ENCODE measurements at regions of chr19 and their contacts with region 1.

Region 1: GRCh38 chr19:29878973-29879654 is 62.9 kb upstream of the URI1 start:
- DNase-seq: peak; percentile 91
- H3K4me3 ChIP-seq: peak overlapping the region; percentile 46 to 63
- H3K27ac ChIP-seq: no peak overlapping the region
- H3K4me1 ChIP-seq: peaks cover 0 to 6% of the 10 kb centered on the region in 2 experiments; a peak in 1 of 4 replicates
- H3K27me3 ChIP-seq: no peaks in the 10 kb centered on the region; the same call in 1 of the 2 replicates
- CTCF ChIP-seq: no peak
- EP300 ChIP-seq: no peak
- RAD21 ChIP-seq: no peak

Region 2: GRCh38 chr19:29731331-29731850 is 147.7 kb before region 1 on chr19:
- CTCF ChIA-PET with region 1: interaction called, 81 read pairs
- POLR2A ChIA-PET with region 1: no interaction called
- DNase-seq: no peak
- H3K4me3 ChIP-seq: no peak overlapping the region
- H3K27ac ChIP-seq: no peak overlapping the region
- H3K4me1 ChIP-seq: no peaks in the 10 kb centered on the region
- H3K27me3 ChIP-seq: no peaks in the 10 kb centered on the region; the same call in 1 of the 2 replicates
- CTCF ChIP-seq: no peak
- EP300 ChIP-seq: no peak
- RAD21 ChIP-seq: no peak

Region 3: DNA sequence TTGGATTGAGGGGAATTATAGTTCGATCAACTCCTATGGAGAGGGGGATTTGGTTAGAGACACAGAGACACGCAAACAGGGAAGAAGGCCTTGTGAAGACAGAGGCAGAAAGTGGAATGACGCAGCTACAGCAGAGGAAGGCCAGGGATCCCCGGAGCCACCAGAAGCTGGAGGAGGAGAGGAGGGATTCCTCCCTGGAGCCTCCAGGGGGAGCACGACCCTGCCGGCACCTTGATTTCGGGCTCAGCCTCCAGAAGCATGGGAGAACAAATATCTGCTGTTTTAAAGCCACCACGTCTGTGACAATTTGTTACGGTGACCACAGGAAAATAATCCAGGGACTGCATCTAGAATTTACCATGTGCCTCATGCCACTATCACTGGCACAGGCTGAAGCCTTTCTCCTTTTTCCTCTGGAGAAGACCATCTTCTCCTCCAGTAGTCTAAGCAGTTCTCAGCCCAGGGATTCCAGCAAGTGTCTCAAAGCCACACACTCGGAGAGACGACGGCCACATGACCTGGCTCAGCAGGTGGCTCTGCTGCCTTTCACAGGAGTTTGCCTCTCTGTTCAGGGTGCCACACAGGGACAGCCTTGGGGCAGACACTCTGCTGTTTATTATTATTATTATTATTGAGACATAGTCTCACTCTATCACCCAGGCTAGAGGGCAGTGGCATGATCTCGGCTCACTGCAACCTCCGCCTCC is 107.3 kb before region 1 on chr19:
- CTCF ChIA-PET with region 1: interaction called, 31 read pairs
- POLR2A ChIA-PET with region 1: no interaction called
- DNase-seq: peak; percentile 86
- H3K4me3 ChIP-seq: no peak overlapping the region
- H3K27ac ChIP-seq: no peak overlapping the region
- H3K4me1 ChIP-seq: peaks cover 0 to 6% of the 10 kb centered on the region in 2 experiments; a peak in 1 of 4 replicates
- H3K27me3 ChIP-seq: no peaks in the 10 kb centered on the region
- CTCF ChIP-seq: peak; percentile 70
- EP300 ChIP-seq: no peak
- RAD21 ChIP-seq: peak; percentile 70

Region 4: DNA sequence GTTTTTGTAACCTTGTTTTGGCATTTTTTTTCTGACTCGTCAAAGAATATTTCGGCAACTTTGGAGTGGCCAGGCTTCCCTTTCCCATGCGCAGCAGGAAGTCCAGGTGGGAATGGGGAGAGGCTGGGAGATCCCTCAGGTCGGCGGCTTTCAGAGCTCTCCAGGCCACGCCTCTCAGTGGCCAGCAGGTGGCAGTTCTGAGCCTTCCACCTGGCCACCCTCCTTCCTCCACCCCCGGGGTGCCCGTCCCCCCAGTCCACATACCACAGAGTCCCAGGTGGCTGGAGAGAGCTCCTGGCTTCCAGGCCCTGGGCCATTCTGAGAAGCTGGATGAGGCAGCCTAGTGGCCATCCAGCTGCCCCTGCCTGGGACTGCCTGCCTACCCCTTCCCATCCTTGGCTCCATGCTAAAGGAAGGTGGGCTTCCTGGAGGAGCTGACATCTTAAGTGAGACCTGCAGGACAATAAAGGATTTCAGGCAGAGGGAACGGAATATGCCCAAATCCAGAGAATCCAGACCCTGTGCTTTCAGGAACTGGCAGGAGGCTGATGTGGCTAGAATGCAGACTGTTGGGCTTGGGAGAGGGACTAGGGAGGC is 21.0 kb before region 1 on chr19:
- CTCF ChIA-PET with region 1: interaction called, 51 read pairs
- POLR2A ChIA-PET with region 1: no interaction called
- DNase-seq: peak; percentile 77
- H3K4me3 ChIP-seq: peak overlapping the region in 1 of 2 experiments; percentile 47; a peak in 1 of 4 replicates
- H3K27ac ChIP-seq: no peak overlapping the region
- H3K4me1 ChIP-seq: no peaks in the 10 kb centered on the region; a peak in 1 of 4 replicates
- H3K27me3 ChIP-seq: no peaks in the 10 kb centered on the region; the same call in 1 of the 2 replicates
- CTCF ChIP-seq: peak; percentile 56
- EP300 ChIP-seq: no peak
- RAD21 ChIP-seq: peak; percentile 51